Transverse colon (tissue), 4 donors: ENCODE measurements at regions of chr9 and their contacts with region 1.

Region 1: DNA sequence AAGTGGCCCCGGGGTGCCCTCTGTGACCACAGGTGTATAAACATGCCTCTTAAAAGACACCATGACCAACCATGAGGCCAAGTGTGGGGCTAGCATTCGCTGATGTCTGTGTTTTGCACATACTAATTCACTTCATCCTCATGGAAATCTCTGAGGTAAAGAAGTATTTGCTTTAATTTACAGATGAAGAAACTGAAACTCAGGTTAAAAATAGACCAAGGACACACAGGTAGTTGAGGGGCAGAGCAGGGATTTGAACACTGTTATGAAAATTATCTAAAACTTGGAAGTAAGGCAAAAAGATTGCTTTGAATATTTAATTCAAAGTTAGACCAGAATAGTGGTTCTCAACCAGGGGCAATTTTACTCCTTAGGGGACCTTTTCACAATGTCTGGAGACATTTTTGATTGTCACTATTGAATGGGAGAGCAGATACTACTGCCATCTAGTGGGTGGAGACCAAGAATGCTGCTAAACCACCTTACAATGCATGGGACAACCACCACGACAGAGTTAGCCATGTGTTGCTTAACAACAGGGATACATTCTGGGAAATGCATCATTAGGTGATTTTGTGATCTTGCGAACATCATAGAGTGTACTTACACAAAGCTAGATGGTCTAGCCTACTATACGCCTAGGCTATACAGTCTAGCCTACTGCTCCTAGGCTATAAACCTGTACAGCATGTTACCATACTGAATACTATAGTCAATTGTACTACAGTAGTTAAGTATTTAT is 8.0 kb upstream of the FXN start:
- DNase-seq: peak; percentile 22
- H3K4me3 ChIP-seq: no peak overlapping the region
- H3K27ac ChIP-seq: no peak overlapping the region
- H3K4me1 ChIP-seq: no peaks in the 10 kb centered on the region
- H3K27me3 ChIP-seq: no peaks in the 10 kb centered on the region
- CTCF ChIP-seq: peak; percentile 61 to 75 (median 70)
- EP300 ChIP-seq: no peak
- POLR2A ChIP-seq: no peak

Region 2: DNA sequence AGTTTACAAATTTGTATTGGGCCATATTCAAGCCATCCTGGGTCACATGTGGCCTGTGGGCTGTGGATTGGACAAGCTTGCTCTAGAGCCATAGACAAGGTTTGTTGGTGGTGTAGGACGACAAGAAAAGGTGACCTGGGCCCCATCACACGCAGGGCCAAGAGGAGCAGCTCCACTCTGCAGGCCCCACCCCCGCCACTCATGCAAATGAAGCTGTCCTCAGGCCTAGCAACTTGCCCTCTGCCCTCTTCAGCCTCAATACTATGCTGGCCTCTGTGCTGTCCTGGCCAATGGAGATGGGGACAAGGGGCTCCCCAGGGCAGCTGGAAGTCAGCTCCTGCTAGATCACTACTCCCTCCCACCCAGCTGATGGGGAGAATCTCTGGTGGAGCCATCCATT is 431.7 kb before region 1 on chr9:
- in situ Hi-C with region 1: loop called in 2 of 4 experiments (anchors 10 to 25 kb)
- intact Hi-C with region 1: no loop called
- DNase-seq: no peak
- H3K4me3 ChIP-seq: no peak overlapping the region
- H3K27ac ChIP-seq: no peak overlapping the region
- H3K4me1 ChIP-seq: no peaks in the 10 kb centered on the region
- H3K27me3 ChIP-seq: no peaks in the 10 kb centered on the region
- CTCF ChIP-seq: no peak
- EP300 ChIP-seq: no peak
- POLR2A ChIP-seq: no peak

Region 3: DNA sequence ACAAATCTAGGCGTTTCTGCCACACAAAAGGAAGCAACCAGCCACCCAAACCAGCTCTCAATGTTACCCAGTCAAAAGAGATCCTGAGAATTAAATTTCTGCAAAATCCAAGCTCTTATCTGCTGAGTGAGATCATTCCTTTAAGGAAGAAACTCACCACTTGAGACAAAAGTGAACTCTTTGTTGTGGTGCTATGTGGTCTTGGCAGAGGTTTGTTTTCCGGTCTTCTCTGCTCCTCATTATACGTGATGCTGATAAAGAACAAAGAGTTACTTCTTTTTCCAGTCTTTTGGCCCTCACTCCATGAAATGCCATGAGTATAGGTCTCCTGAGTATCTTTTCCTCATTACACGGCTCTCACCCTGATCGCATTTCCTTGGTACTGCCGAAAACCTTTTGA is 95.7 kb before region 1 on chr9:
- in situ Hi-C with region 1: no loop called
- intact Hi-C with region 1: no loop called
- DNase-seq: no peak
- H3K4me3 ChIP-seq: no peak overlapping the region
- H3K27ac ChIP-seq: no peak overlapping the region
- H3K4me1 ChIP-seq: no peaks in the 10 kb centered on the region
- H3K27me3 ChIP-seq: no peaks in the 10 kb centered on the region
- CTCF ChIP-seq: no peak
- EP300 ChIP-seq: no peak
- POLR2A ChIP-seq: no peak

Region 4: DNA sequence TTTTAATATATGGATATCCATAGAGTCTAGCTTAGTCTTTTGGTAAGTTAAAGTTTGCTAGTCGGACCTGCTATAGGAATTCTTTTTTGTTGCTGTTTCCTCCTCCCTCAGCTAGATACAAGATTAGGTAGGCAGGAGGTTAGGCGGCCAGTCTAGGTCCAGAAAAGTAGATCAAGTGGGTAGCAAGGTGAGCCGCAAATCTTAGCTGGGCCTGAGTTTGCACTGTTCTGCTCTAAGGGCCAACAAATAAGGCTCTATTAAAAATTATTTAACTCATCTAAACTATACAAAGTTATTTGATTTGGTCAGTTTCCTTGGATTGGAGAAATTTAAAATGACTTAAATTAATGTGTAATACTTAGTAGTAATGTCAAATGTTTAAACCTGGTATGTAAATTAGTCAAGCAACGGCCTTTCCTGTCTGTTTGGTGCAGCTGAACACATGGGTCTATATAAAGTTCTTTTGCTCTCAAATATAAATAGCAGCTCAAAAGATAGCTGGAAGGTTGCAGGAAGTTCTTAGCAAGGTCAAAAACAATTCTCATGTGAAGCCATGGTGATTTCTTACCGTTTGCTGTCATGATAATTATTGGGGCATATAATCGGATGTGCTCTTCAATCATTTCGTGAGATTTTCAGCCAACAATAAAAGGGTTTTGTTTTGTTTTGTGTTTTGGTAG is 85.6 kb before region 1 on chr9:
- in situ Hi-C with region 1: no loop called
- intact Hi-C with region 1: no loop called
- DNase-seq: no peak
- H3K4me3 ChIP-seq: no peak overlapping the region
- H3K27ac ChIP-seq: no peak overlapping the region
- H3K4me1 ChIP-seq: no peaks in the 10 kb centered on the region
- H3K27me3 ChIP-seq: no peaks in the 10 kb centered on the region
- CTCF ChIP-seq: no peak
- EP300 ChIP-seq: no peak
- POLR2A ChIP-seq: no peak